ENCODE measurements at regions of chr21 and their contacts with region 1.

Region 1: DNA sequence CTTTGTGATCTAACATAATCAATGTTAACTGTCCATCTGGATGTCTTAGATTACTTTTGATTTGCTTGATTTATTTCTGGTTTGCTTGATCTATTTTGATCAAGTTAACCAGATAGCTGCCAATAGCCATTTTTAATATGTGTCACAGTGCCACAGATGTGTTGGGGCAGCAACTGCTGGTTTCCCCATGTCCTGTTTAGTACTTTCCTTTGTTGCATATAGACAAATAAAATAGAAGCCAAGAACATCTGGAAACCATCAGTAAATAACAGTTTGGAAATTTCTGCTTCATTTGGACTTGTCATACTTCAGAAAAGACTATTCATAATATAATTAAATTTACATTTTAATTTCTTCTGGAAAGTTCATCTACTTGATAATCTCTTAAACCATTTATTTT is 145.6 kb upstream of the C21orf91 start:
- DNase-seq: no peak
- H3K4me3 ChIP-seq: no peak overlapping the region
- H3K27ac ChIP-seq: no peak overlapping the region
- H3K4me1 ChIP-seq: no peaks in the 10 kb centered on the region
- H3K27me3 ChIP-seq: no peaks in the 10 kb centered on the region
- CTCF ChIP-seq: no peak

Region 2: GRCh38 chr21:18023157-18023556 is 58.4 kb after region 1 on chr21:
- CTCF ChIA-PET with region 1: no interaction called
- dilution Hi-C with region 1: loop called (anchors 5 kb)
- in situ Hi-C with region 1: no loop called
- intact Hi-C with region 1: no loop called
- DNase-seq: no peak
- H3K4me3 ChIP-seq: no peak overlapping the region
- H3K27ac ChIP-seq: no peak overlapping the region
- H3K4me1 ChIP-seq: no peaks in the 10 kb centered on the region
- H3K27me3 ChIP-seq: no peaks in the 10 kb centered on the region
- CTCF ChIP-seq: no peak